PC-3 (cell line): ENCODE measurements at regions of chr10 and their contacts with region 1.

Region 1: GRCh38 chr10:4767033-4767814 is 58.8 kb upstream of the AKR1E2 start:
- DNase-seq: peak; percentile 52
- ATAC-seq: no peak
- H3K4me3 ChIP-seq: no peak overlapping the region
- H3K27ac ChIP-seq: peak overlapping the region; percentile 99
- H3K4me1 ChIP-seq: peaks cover 81% of the 10 kb centered on the region
- H3K27me3 ChIP-seq: no peaks in the 10 kb centered on the region
- CTCF ChIP-seq: peak; percentile 69

Region 2: GRCh38 chr10:3805791-3806461 is 961.3 kb before region 1 on chr10:
- CTCF ChIA-PET with region 1: no interaction called
- POLR2A ChIA-PET with region 1: interaction called, 4 read pairs
- intact Hi-C with region 1: loop called (anchors 2 kb)
- DNase-seq: peak; percentile 77
- ATAC-seq: peak; percentile 29
- H3K4me3 ChIP-seq: peak overlapping the region; percentile 54; the same call in 1 of the 2 replicates
- H3K27ac ChIP-seq: peak overlapping the region; percentile 100
- H3K4me1 ChIP-seq: peaks cover 72% of the 10 kb centered on the region
- H3K27me3 ChIP-seq: no peaks in the 10 kb centered on the region
- CTCF ChIP-seq: no peak

Region 3: DNA sequence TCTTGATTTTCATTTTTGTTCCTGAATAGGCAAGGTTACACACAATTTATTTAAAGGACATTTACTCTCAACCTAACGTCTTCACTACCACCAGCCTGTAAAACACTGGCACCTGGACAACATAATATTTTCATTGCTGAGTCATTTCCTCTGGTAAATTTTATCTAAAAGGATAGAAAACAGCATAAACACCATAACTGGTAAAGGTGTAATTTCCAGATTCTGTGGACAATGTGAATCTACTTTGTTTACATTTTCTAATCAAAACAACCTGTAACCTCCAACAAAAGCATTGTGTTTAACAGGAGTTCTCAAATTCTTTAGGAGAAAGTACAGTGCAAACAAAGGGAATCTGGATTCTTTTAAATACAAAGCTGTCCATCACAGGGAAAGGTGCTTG is 413.3 kb before region 1 on chr10:
- CTCF ChIA-PET with region 1: interaction called, 3 read pairs
- POLR2A ChIA-PET with region 1: no interaction called
- intact Hi-C with region 1: loop called (anchors 2 kb)
- DNase-seq: peak; percentile 81
- ATAC-seq: peak; percentile 75
- H3K4me3 ChIP-seq: no peak overlapping the region; the same call in 1 of the 2 replicates
- H3K27ac ChIP-seq: peak overlapping the region; percentile 92
- H3K4me1 ChIP-seq: peaks cover 33% of the 10 kb centered on the region
- H3K27me3 ChIP-seq: no peaks in the 10 kb centered on the region
- CTCF ChIP-seq: no peak

Region 4: DNA sequence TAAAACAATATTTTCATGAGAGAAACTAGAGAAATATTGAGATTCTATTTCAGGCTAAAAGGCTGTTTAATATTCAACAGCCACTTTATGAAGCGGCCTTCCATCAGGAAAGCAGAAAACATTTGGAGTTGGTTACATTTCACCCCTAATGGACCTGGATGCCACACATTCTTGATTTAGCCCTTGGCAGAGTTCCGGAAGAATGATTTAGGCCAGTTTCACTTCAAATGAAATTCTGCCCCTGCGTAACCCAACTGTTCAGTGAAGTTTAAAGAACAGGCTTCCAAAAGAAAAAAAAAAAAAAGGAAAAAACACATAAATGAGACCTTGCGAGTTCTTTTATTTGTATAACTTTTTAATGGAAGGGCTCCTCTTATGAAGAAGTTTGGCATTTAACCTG is 180.4 kb before region 1 on chr10:
- CTCF ChIA-PET with region 1: no interaction called
- POLR2A ChIA-PET with region 1: no interaction called
- intact Hi-C with region 1: no loop called
- DNase-seq: no peak
- ATAC-seq: no peak
- H3K4me3 ChIP-seq: no peak overlapping the region
- H3K27ac ChIP-seq: no peak overlapping the region
- H3K4me1 ChIP-seq: no peaks in the 10 kb centered on the region
- H3K27me3 ChIP-seq: no peaks in the 10 kb centered on the region
- CTCF ChIP-seq: no peak

Region 5: GRCh38 chr10:4663162-4663904 is 103.9 kb before region 1 on chr10:
- CTCF ChIA-PET with region 1: no interaction called
- POLR2A ChIA-PET with region 1: interaction called, 7 read pairs
- intact Hi-C with region 1: loop called (anchors 1 kb)
- DNase-seq: peak; percentile 93
- ATAC-seq: peak; percentile 93
- H3K4me3 ChIP-seq: no peak overlapping the region
- H3K27ac ChIP-seq: peak overlapping the region; percentile 98
- H3K4me1 ChIP-seq: peaks cover 45% of the 10 kb centered on the region
- H3K27me3 ChIP-seq: no peaks in the 10 kb centered on the region
- CTCF ChIP-seq: no peak

Region 6: DNA sequence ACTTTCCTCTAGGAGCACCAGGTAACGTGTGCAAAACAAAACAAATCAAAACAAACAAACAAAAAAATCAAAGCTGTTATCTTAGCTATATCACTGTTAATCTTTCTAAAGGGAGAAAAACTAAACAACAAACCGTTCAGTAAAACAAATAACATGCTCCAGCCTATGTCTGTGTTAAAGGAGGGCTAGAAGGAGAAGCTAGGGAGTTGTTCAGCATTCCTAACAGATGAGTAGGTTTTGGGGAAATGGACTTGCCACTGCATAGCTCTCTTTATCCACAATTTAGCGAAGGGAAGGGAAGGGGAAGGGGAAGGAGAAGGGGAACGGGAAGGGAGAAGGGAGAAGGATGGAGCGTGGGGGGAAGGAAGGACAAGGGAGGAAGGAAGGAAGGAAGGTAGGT is 75.4 kb before region 1 on chr10:
- CTCF ChIA-PET with region 1: interaction called, 4 read pairs
- POLR2A ChIA-PET with region 1: interaction called, 16 read pairs
- intact Hi-C with region 1: loop called (anchors 1 kb)
- DNase-seq: peak; percentile 71
- ATAC-seq: peak; percentile 82
- H3K4me3 ChIP-seq: no peak overlapping the region
- H3K27ac ChIP-seq: peak overlapping the region; percentile 100
- H3K4me1 ChIP-seq: peaks cover 38% of the 10 kb centered on the region
- H3K27me3 ChIP-seq: no peaks in the 10 kb centered on the region
- CTCF ChIP-seq: no peak

Region 7: GRCh38 chr10:4867520-4868356 is 100.5 kb after region 1 on chr10:
- CTCF ChIA-PET with region 1: no interaction called
- POLR2A ChIA-PET with region 1: no interaction called
- intact Hi-C with region 1: no loop called
- DNase-seq: no peak
- ATAC-seq: no peak
- H3K4me3 ChIP-seq: no peak overlapping the region
- H3K27ac ChIP-seq: no peak overlapping the region
- H3K4me1 ChIP-seq: no peaks in the 10 kb centered on the region
- H3K27me3 ChIP-seq: no peaks in the 10 kb centered on the region
- CTCF ChIP-seq: no peak